Sigmoid colon (tissue), 7 donors: ENCODE measurements at regions of chr9 and their contacts with region 1.

Region 1: DNA sequence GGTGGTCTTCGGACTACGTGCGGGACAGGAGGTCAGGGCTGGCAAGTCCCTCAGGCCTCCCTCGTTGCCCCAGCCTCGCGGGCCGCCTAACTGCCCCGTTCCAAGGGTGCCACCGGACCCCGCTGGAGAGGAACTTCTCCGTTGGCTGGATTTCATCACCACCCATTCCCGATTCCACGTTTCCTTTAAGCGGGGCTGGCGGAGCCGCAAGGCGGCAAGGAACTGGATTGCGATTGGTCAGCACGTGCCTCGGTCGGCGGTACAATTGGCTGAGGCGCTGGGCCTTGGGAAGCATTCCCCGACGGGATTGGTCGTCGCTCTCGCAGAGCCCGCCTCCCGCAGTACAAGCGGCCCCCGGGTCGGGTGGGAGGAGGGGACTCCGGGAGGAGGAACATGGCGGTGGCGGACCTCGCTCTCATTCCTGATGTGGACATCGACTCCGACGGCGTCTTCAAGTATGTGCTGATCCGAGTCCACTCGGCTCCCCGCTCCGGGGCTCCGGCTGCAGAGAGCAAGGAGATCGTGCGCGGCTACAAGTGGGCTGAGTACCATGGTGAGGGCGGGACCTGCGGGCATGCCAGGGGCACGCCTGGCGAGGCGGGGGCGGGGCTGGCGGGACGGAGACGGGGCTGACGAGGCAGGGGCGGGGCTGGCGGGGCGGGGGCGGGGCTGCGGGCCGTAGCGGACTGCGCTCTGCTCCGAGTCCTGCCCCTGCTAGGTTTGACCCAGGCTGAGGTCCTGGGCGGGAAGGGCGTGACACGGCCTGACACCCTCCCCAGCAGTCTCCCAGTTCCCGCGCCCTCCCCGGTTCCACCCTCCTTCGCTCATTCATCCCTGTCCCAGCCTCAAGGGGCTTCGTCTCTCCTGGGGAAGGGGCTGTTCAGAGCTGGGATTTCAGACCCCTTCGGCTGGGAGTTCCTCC is at the start of gene PHPT1:
- DNase-seq: peak; percentile 100
- H3K4me3 ChIP-seq: peak within 1 kb of the TSS; percentile 68 to 82 (median 70)
- H3K27ac ChIP-seq: peak within 1 kb of the TSS; percentile 87 to 93 (median 90)
- H3K4me1 ChIP-seq: peaks cover 0 to 56% (median 51%) of the 10 kb centered on the region in 4 donors
- H3K27me3 ChIP-seq: peaks cover 24 to 40% (median 39%) of the 10 kb centered on the region in 3 donors
- CTCF ChIP-seq: no peak
- EP300 ChIP-seq: no peak
- POLR2A ChIP-seq: peak; percentile 58 to 90
- total RNA-seq, gene PHPT1: 39.0 to 73.1 (median 56.4) TPM

Region 2: GRCh38 chr9:137034863-137035761 is 185.8 kb after region 1 on chr9:
- intact Hi-C with region 1: loop called (anchors 10 kb)
- DNase-seq: peak; percentile 89
- H3K4me3 ChIP-seq: no peak overlapping the region
- H3K27ac ChIP-seq: no peak overlapping the region
- H3K4me1 ChIP-seq: peaks cover 0 to 10% (median 9%) of the 10 kb centered on the region in 4 donors
- H3K27me3 ChIP-seq: peaks cover 0 to 9% (median 0%) of the 10 kb centered on the region in 3 donors
- CTCF ChIP-seq: peak; percentile 80 to 92 (median 86)
- EP300 ChIP-seq: no peak
- POLR2A ChIP-seq: no peak